CD4-positive, alpha-beta memory T cell (primary cell): ENCODE measurements at regions of chr12 and their contacts with region 1.

Region 1: GRCh38 chr12:71610031-71610795 is 53.4 kb downstream of the ZFC3H1 start:
- DNase-seq: peak in 4 of 5 donors; percentile 1 to 13 (median 5)
- H3K4me3 ChIP-seq: no peak overlapping the region
- H3K4me3 Mint-ChIP-seq: peak overlapping the region in 5 of 8 donors; percentile 4 to 64 (median 40)
- H3K27ac ChIP-seq: peak overlapping the region; percentile 12
- H3K27ac Mint-ChIP-seq: peak overlapping the region; percentile 60 to 92 (median 81)
- H3K4me1 ChIP-seq: peaks cover 17% of the 10 kb centered on the region
- H3K4me1 Mint-ChIP-seq: peaks cover 15 to 24% (median 20%) of the 10 kb centered on the region in 4 donors
- H3K27me3 ChIP-seq: no peaks in the 10 kb centered on the region
- H3K27me3 Mint-ChIP-seq: no peaks in the 10 kb centered on the region

Region 2: GRCh38 chr12:71599210-71599609 is 11.0 kb before region 1 on chr12:
- CTCF ChIA-PET with region 1: interaction called, 3 read pairs
- POLR2A ChIA-PET with region 1: no interaction called
- intact Hi-C with region 1: loop called (anchors 2 kb)
- DNase-seq: no peak
- H3K4me3 ChIP-seq: no peak overlapping the region
- H3K4me3 Mint-ChIP-seq: no peak overlapping the region
- H3K27ac ChIP-seq: no peak overlapping the region
- H3K27ac Mint-ChIP-seq: no peak overlapping the region
- H3K4me1 ChIP-seq: no peaks in the 10 kb centered on the region
- H3K4me1 Mint-ChIP-seq: peaks cover 0 to 1% (median 0%) of the 10 kb centered on the region in 4 donors
- H3K27me3 ChIP-seq: peaks cover 4% of the 10 kb centered on the region
- H3K27me3 Mint-ChIP-seq: peaks cover 5 to 28% of the 10 kb centered on the region in 2 donors

Region 3: DNA sequence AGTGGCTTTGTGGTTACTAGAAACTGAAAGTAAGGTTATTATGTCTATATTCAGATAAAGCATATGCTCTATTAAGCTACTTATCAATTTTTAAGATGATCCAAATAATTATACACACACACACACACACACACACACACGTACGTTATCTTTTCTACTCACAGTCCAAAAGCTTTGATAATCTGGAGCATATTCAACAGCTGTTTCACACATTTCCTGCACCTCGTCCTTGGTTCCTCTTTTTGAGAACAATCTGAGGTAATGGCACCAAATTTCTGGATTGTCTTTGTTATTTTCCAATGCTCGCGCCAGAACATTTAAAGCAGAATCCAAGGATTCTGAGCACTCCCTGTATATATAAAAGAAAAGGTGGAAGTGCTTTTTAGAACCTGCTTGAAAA is 15.9 kb after region 1 on chr12:
- CTCF ChIA-PET with region 1: no interaction called
- POLR2A ChIA-PET with region 1: no interaction called
- intact Hi-C with region 1: no loop called
- DNase-seq: no peak
- H3K4me3 ChIP-seq: no peak overlapping the region
- H3K4me3 Mint-ChIP-seq: no peak overlapping the region
- H3K27ac ChIP-seq: no peak overlapping the region
- H3K27ac Mint-ChIP-seq: peak overlapping the region in 6 of 7 donors; percentile 6 to 77 (median 23)
- H3K4me1 ChIP-seq: peaks cover 12% of the 10 kb centered on the region
- H3K4me1 Mint-ChIP-seq: peaks cover 10 to 15% (median 11%) of the 10 kb centered on the region in 4 donors
- H3K27me3 ChIP-seq: no peaks in the 10 kb centered on the region
- H3K27me3 Mint-ChIP-seq: no peaks in the 10 kb centered on the region

Region 4: GRCh38 chr12:71645268-71645667 is 35.1 kb after region 1 on chr12:
- CTCF ChIA-PET with region 1: no interaction called
- POLR2A ChIA-PET with region 1: no interaction called
- intact Hi-C with region 1: loop called (anchors 5 kb)
- DNase-seq: no peak
- H3K4me3 ChIP-seq: no peak overlapping the region
- H3K4me3 Mint-ChIP-seq: no peak overlapping the region
- H3K27ac ChIP-seq: no peak overlapping the region
- H3K27ac Mint-ChIP-seq: peak overlapping the region in 3 of 7 donors; percentile 52 to 78 (median 68)
- H3K4me1 ChIP-seq: peaks cover 12% of the 10 kb centered on the region
- H3K4me1 Mint-ChIP-seq: peaks cover 16 to 47% (median 27%) of the 10 kb centered on the region in 4 donors
- H3K27me3 ChIP-seq: no peaks in the 10 kb centered on the region
- H3K27me3 Mint-ChIP-seq: no peaks in the 10 kb centered on the region